Naive thymus-derived CD4-positive, alpha-beta T cell (primary cell): ENCODE measurements at regions of chr4 and their contacts with region 1.

Region 1: DNA sequence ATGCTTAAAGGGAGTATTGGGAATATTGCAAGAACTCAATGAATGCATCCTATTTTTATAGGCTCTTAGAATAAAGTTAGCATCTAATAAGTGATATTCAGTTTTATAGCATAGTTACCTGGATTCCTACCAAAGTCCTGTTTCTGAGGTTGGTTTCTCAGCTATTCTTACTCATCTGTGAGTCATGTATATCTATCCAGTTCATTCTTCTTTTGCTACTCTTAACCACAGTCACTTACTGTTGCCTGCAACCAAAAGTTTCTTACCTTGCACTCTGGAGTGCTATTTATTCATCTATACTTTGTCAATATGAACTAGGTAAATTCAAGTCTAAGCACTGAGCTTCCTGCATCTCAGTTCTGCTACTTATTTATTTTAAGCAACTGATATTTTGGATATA is 322.5 kb downstream of the HS3ST1 start:
- DNase-seq: no peak
- ATAC-seq: no peak
- H3K4me3 ChIP-seq: no peak overlapping the region
- H3K4me3 Mint-ChIP-seq: no peak overlapping the region
- H3K27ac ChIP-seq: no peak overlapping the region
- H3K27ac Mint-ChIP-seq: no peak overlapping the region
- H3K4me1 ChIP-seq: no peaks in the 10 kb centered on the region
- H3K4me1 Mint-ChIP-seq: peaks cover 0 to 10% (median 0%) of the 10 kb centered on the region in 7 donors
- H3K27me3 ChIP-seq: no peaks in the 10 kb centered on the region
- H3K27me3 Mint-ChIP-seq: peaks cover 0 to 6% (median 0%) of the 10 kb centered on the region in 5 donors

Region 2: DNA sequence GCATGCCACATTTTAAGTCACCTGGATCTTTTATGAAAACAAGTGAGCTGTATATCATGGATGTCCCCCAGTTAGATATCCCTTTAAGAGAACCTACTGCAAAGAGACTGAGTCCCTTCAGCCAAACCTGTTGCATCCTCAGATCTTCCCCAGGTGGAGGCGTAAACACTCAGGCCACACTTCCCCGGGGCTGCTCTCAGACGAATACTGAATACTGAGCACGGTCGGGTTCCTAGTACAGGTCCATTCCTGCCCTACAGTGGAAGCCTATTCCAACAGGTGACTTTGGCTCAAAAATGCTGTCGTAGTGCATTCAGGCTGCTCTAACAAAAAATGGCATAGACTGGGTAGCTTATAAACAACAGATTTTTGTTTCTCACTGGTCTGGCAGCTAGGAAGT is 101.4 kb before region 1 on chr4:
- CTCF ChIA-PET with region 1: no interaction called
- POLR2A ChIA-PET with region 1: no interaction called
- intact Hi-C with region 1: loop called in 1 of 2 experiments (anchors 10 kb)
- DNase-seq: no peak
- ATAC-seq: no peak
- H3K4me3 ChIP-seq: no peak overlapping the region
- H3K4me3 Mint-ChIP-seq: no peak overlapping the region
- H3K27ac ChIP-seq: no peak overlapping the region
- H3K27ac Mint-ChIP-seq: no peak overlapping the region
- H3K4me1 ChIP-seq: no peaks in the 10 kb centered on the region
- H3K4me1 Mint-ChIP-seq: peaks cover 0 to 15% (median 4%) of the 10 kb centered on the region in 7 donors
- H3K27me3 ChIP-seq: no peaks in the 10 kb centered on the region
- H3K27me3 Mint-ChIP-seq: peaks cover 0 to 14% (median 6%) of the 10 kb centered on the region in 5 donors